CD8-positive, alpha-beta T cell (primary cell): ENCODE measurements at regions of chr14 and their contacts with region 1.

Region 1: DNA sequence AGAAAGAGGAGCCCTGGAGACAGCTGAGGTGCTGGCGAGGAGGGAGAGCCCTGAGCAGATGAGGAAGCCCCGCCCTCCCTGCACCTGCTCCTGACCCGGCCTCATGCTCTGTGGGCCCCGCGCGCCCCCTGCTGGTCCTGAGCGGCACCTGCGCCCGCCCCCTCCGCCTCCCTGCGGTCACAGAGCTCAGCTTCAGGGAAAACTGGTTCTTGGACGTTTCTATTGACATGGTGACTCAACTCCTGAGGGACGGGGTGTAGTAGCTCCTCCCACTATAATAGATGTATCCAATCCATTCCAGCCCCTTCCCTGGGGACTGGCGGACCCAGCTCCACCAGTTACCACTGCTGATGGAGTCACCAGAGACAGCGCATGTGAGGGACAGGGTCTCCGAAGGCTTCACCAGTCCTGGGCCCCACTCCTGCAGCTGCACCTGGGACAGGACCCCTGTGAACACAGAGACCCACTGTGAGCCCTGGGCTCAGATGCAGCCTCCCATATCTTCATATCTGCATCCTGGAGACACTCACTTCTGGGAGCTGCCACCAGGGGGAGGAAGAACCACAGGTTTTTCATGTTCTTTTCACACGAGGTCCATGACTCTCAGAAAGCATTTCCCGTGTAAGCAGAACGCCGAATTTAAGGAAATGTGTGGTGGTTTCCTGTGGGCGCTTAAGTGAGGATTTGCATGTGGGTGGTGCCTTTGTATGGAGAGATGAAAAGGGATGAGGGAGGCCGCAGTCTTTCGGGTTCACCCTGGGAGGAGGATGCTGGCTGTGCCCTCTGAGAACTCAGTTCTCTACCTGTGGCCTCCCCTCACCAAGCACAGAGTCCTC is 1346.4 kb downstream of the TMEM121 start:
- DNase-seq: peak; percentile 66 to 87 (median 78)
- ATAC-seq: peak; percentile 89
- H3K4me3 ChIP-seq: peak overlapping the region; percentile 14 to 41
- H3K4me3 Mint-ChIP-seq: peak overlapping the region; percentile 58
- H3K27ac ChIP-seq: no peak overlapping the region
- H3K27ac Mint-ChIP-seq: no peak overlapping the region
- H3K4me1 ChIP-seq: peaks cover 8% of the 10 kb centered on the region
- H3K4me1 Mint-ChIP-seq: peaks cover 8% of the 10 kb centered on the region
- H3K27me3 ChIP-seq: peaks cover 0 to 2% of the 10 kb centered on the region in 2 experiments
- H3K27me3 Mint-ChIP-seq: peaks cover 27% of the 10 kb centered on the region
- CTCF ChIP-seq: peak; percentile 80

Region 2: GRCh38 chr14:105738261-105739037 is 1134.4 kb before region 1 on chr14:
- CTCF ChIA-PET with region 1: no interaction called
- POLR2A ChIA-PET with region 1: no interaction called
- intact Hi-C with region 1: no loop called
- DNase-seq: no peak
- ATAC-seq: no peak
- H3K4me3 ChIP-seq: no peak overlapping the region
- H3K4me3 Mint-ChIP-seq: no peak overlapping the region
- H3K27ac ChIP-seq: no peak overlapping the region
- H3K27ac Mint-ChIP-seq: no peak overlapping the region
- H3K4me1 ChIP-seq: no peaks in the 10 kb centered on the region
- H3K4me1 Mint-ChIP-seq: no peaks in the 10 kb centered on the region
- H3K27me3 ChIP-seq: no peaks in the 10 kb centered on the region
- H3K27me3 Mint-ChIP-seq: no peaks in the 10 kb centered on the region
- CTCF ChIP-seq: no peak

Region 3: DNA sequence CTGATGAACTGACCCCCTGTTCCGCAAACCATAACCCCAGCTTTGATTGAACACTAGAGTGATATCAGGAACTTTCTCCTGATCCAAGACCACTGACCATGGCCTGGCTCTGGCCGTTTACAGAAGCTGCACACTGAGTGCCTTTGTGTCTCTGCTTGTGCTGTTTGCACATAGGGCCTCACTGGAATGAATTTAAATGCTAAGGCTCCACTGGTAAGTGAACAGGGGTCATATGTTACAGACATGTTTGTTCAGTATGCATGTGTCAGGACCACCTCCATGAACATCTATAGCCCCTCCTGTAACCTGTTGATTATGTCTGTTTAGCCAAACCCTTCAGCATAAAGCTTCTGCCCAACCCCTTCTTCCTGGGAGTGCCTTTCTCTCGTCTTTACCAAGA is 106.7 kb before region 1 on chr14:
- CTCF ChIA-PET with region 1: no interaction called
- POLR2A ChIA-PET with region 1: no interaction called
- intact Hi-C with region 1: no loop called
- DNase-seq: no peak
- ATAC-seq: no peak
- H3K4me3 ChIP-seq: no peak overlapping the region
- H3K4me3 Mint-ChIP-seq: no peak overlapping the region
- H3K27ac ChIP-seq: no peak overlapping the region
- H3K27ac Mint-ChIP-seq: no peak overlapping the region
- H3K4me1 ChIP-seq: peaks cover 18% of the 10 kb centered on the region
- H3K4me1 Mint-ChIP-seq: peaks cover 43% of the 10 kb centered on the region
- H3K27me3 ChIP-seq: no peaks in the 10 kb centered on the region
- H3K27me3 Mint-ChIP-seq: no peaks in the 10 kb centered on the region
- CTCF ChIP-seq: no peak

Region 4: GRCh38 chr14:106883218-106883692 is 10.4 kb after region 1 on chr14:
- CTCF ChIA-PET with region 1: interaction called, 12 read pairs
- POLR2A ChIA-PET with region 1: no interaction called
- intact Hi-C with region 1: no loop called
- DNase-seq: peak in 4 of 9 experiments; percentile 36 to 61 (median 60)
- ATAC-seq: peak; percentile 46
- H3K4me3 ChIP-seq: no peak overlapping the region
- H3K4me3 Mint-ChIP-seq: no peak overlapping the region
- H3K27ac ChIP-seq: no peak overlapping the region
- H3K27ac Mint-ChIP-seq: no peak overlapping the region
- H3K4me1 ChIP-seq: no peaks in the 10 kb centered on the region
- H3K4me1 Mint-ChIP-seq: no peaks in the 10 kb centered on the region
- H3K27me3 ChIP-seq: peaks cover 0 to 2% of the 10 kb centered on the region in 2 experiments
- H3K27me3 Mint-ChIP-seq: peaks cover 6% of the 10 kb centered on the region
- CTCF ChIP-seq: peak; percentile 52